ENCODE measurements at regions of chr6 and their contacts with region 1.

Region 1: GRCh38 chr6:87701676-87702588 is at the start of gene AKIRIN2:
- DNase-seq: peak; percentile 97
- ATAC-seq: peak; percentile 78
- H3K4me3 Mint-ChIP-seq: peak within 1 kb of the TSS; percentile 97
- H3K27ac Mint-ChIP-seq: peak within 1 kb of the TSS; percentile 97
- H3K4me1 Mint-ChIP-seq: peaks cover 53% of the 10 kb centered on the region
- H3K27me3 Mint-ChIP-seq: no peaks in the 10 kb centered on the region
- CTCF ChIP-seq: no peak
- total RNA-seq, gene AKIRIN2: 61.9 and 76.4 TPM in 2 replicates

Region 2: GRCh38 chr6:87407901-87408720 is 293.8 kb before region 1 on chr6 and contains the start of gene CFAP206:
- CTCF ChIA-PET with region 1: no interaction called
- POLR2A ChIA-PET with region 1: interaction called, 6 read pairs
- intact Hi-C with region 1: loop called (anchors 1 kb)
- DNase-seq: peak; percentile 80
- ATAC-seq: peak; percentile 80
- H3K4me3 Mint-ChIP-seq: peak within 1 kb of the TSS; percentile 87
- H3K27ac Mint-ChIP-seq: peak within 1 kb of the TSS; percentile 79
- H3K4me1 Mint-ChIP-seq: peaks cover 9% of the 10 kb centered on the region
- H3K27me3 Mint-ChIP-seq: peaks cover 8% of the 10 kb centered on the region
- CTCF ChIP-seq: no peak
- total RNA-seq, gene CFAP206: 0.09 TPM in 1 of 2 replicates, not detected in the other

Region 3: GRCh38 chr6:87684895-87685654 is 16.9 kb before region 1 on chr6:
- CTCF ChIA-PET with region 1: interaction called, 9 read pairs
- POLR2A ChIA-PET with region 1: interaction called, 10 read pairs
- intact Hi-C with region 1: loop called (anchors 2 kb)
- DNase-seq: no peak
- ATAC-seq: no peak
- H3K4me3 Mint-ChIP-seq: no peak overlapping the region
- H3K27ac Mint-ChIP-seq: no peak overlapping the region
- H3K4me1 Mint-ChIP-seq: peaks cover 89% of the 10 kb centered on the region
- H3K27me3 Mint-ChIP-seq: no peaks in the 10 kb centered on the region
- CTCF ChIP-seq: no peak

Region 4: DNA sequence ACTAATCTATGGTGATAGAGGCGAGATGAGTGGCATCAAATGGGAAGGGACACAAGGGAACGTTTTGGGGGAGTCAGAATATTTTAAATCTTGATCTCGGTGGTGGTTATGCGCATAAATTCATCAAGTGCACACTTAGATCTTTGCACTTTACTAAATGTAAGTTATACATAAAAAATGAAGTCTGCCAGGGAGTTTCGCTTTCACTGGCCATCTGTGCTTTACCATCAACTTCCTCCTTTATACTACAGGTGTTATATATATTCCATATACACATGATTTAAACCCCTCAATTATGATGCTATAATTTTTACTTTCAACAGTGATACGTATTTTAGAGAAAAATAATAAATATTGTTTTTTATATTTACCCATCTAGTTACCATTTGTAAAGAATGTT is 97.7 kb after region 1 on chr6:
- CTCF ChIA-PET with region 1: no interaction called
- POLR2A ChIA-PET with region 1: interaction called, 5 read pairs
- intact Hi-C with region 1: loop called (anchors 2 kb)
- DNase-seq: no peak
- ATAC-seq: peak; percentile 48
- H3K4me3 Mint-ChIP-seq: peak overlapping the region; percentile 3
- H3K27ac Mint-ChIP-seq: peak overlapping the region; percentile 2
- H3K4me1 Mint-ChIP-seq: peaks cover 54% of the 10 kb centered on the region
- H3K27me3 Mint-ChIP-seq: no peaks in the 10 kb centered on the region
- CTCF ChIP-seq: no peak

Region 5: DNA sequence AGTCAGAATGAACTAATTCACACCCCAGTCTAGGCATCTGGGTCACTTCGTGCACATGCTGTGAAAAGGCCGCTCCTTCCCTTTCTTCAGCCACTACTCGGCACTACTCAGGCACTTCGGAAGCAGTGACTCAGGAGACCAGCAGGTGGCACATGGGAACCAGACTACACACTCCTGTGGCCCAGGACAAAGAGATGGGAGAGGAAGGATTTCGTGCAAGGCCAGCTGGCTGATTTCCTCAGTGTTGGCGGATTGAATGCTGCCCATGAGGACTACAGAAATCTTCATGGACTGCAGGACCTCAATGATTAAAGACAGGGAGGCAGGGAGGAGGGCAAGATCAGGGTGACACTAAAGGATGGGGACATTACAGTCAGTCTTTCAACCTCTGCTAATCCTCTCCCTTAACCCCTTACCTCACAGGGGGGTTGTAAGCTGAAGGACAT is 227.9 kb after region 1 on chr6:
- CTCF ChIA-PET with region 1: no interaction called
- POLR2A ChIA-PET with region 1: interaction called, 4 read pairs
- intact Hi-C with region 1: loop called (anchors 2 kb)
- DNase-seq: peak; percentile 49
- ATAC-seq: peak; percentile 77
- H3K4me3 Mint-ChIP-seq: no peak overlapping the region
- H3K27ac Mint-ChIP-seq: no peak overlapping the region
- H3K4me1 Mint-ChIP-seq: peaks cover 30% of the 10 kb centered on the region
- H3K27me3 Mint-ChIP-seq: no peaks in the 10 kb centered on the region
- CTCF ChIP-seq: peak; percentile 32

Region 6: GRCh38 chr6:88177961-88178464 is 476.1 kb after region 1 on chr6:
- CTCF ChIA-PET with region 1: no interaction called
- POLR2A ChIA-PET with region 1: no interaction called
- intact Hi-C with region 1: loop called (anchors 2 kb)
- DNase-seq: no peak
- ATAC-seq: peak; percentile 75
- H3K4me3 Mint-ChIP-seq: peak overlapping the region; percentile 36
- H3K27ac Mint-ChIP-seq: peak overlapping the region; percentile 77
- H3K4me1 Mint-ChIP-seq: peaks cover 54% of the 10 kb centered on the region
- H3K27me3 Mint-ChIP-seq: no peaks in the 10 kb centered on the region
- CTCF ChIP-seq: no peak

Region 7: GRCh38 chr6:89638320-89639195 is 1936.6 kb after region 1 on chr6 and contains the start of gene LYRM2:
- CTCF ChIA-PET with region 1: no interaction called
- POLR2A ChIA-PET with region 1: no interaction called
- intact Hi-C with region 1: loop called (anchors 5 kb)
- DNase-seq: peak; percentile 89
- ATAC-seq: peak; percentile 93
- H3K4me3 Mint-ChIP-seq: peak within 1 kb of the TSS; percentile 90
- H3K27ac Mint-ChIP-seq: peak within 1 kb of the TSS; percentile 92
- H3K4me1 Mint-ChIP-seq: peaks cover 28% of the 10 kb centered on the region
- H3K27me3 Mint-ChIP-seq: no peaks in the 10 kb centered on the region
- CTCF ChIP-seq: no peak
- total RNA-seq, gene LYRM2: 41.9 and 44.9 TPM in 2 replicates

Measured in activated B cell treated with CpG ODN at 0.5 μM for 24 hours (primary cell).